T-cell (primary cell): ENCODE measurements at regions of chr6 and their contacts with region 1.

Region 1: DNA sequence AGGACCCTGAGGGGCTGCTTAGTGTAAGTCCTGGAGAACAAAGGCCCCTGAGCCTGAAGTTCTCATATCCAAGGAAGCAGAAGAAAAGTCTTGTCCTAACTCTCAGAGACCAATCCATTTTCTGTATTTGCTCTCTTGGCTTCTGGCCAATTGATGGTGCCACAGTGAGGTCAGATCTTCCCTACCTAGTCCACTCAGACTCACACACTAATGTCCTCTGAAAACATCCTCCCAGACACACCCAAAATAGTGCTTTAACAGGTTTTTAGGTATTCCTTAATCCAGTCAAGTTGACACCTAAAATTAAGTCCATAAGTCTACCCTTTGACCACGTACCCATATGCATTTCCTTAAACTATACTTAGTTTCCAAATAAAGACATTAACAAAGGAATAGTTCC is 29.4 kb downstream of the ZNF292 start:
- DNase-seq: no peak
- ATAC-seq: no peak
- H3K4me3 ChIP-seq: no peak overlapping the region
- H3K4me3 Mint-ChIP-seq: no peak overlapping the region
- H3K27ac ChIP-seq: no peak overlapping the region
- H3K27ac Mint-ChIP-seq: peak overlapping the region in 1 of 2 donors; percentile 7
- H3K4me1 ChIP-seq: peaks cover 5 to 25% of the 10 kb centered on the region in 2 experiments
- H3K4me1 Mint-ChIP-seq: peaks cover 70 to 73% (median 72%) of the 10 kb centered on the region in 3 donors
- H3K27me3 ChIP-seq: no peaks in the 10 kb centered on the region
- H3K27me3 Mint-ChIP-seq: no peaks in the 10 kb centered on the region

Region 2: GRCh38 chr6:86782328-86782727 is 402.5 kb before region 1 on chr6:
- CTCF ChIA-PET with region 1: no interaction called
- POLR2A ChIA-PET with region 1: no interaction called
- DNase-seq: no peak
- ATAC-seq: no peak
- H3K4me3 ChIP-seq: no peak overlapping the region
- H3K4me3 Mint-ChIP-seq: no peak overlapping the region
- H3K27ac ChIP-seq: no peak overlapping the region
- H3K27ac Mint-ChIP-seq: no peak overlapping the region
- H3K4me1 ChIP-seq: no peaks in the 10 kb centered on the region
- H3K4me1 Mint-ChIP-seq: no peaks in the 10 kb centered on the region
- H3K27me3 ChIP-seq: no peaks in the 10 kb centered on the region
- H3K27me3 Mint-ChIP-seq: no peaks in the 10 kb centered on the region

Region 3: GRCh38 chr6:87277123-87277522 is 92.3 kb after region 1 on chr6:
- CTCF ChIA-PET with region 1: no interaction called
- POLR2A ChIA-PET with region 1: interaction called in 1 of 2 experiments, 10 read pairs
- DNase-seq: peak in 1 of 35 experiments; percentile 7
- ATAC-seq: no peak
- H3K4me3 ChIP-seq: no peak overlapping the region
- H3K4me3 Mint-ChIP-seq: no peak overlapping the region
- H3K27ac ChIP-seq: no peak overlapping the region
- H3K27ac Mint-ChIP-seq: peak overlapping the region in 1 of 2 donors; percentile 57
- H3K4me1 ChIP-seq: no peaks in the 10 kb centered on the region
- H3K4me1 Mint-ChIP-seq: peaks cover 18 to 20% (median 19%) of the 10 kb centered on the region in 3 donors
- H3K27me3 ChIP-seq: no peaks in the 10 kb centered on the region
- H3K27me3 Mint-ChIP-seq: no peaks in the 10 kb centered on the region

Region 4: GRCh38 chr6:87350516-87350915 is 165.7 kb after region 1 on chr6:
- CTCF ChIA-PET with region 1: no interaction called
- POLR2A ChIA-PET with region 1: no interaction called
- DNase-seq: no peak
- ATAC-seq: no peak
- H3K4me3 ChIP-seq: no peak overlapping the region
- H3K4me3 Mint-ChIP-seq: no peak overlapping the region
- H3K27ac ChIP-seq: no peak overlapping the region
- H3K27ac Mint-ChIP-seq: no peak overlapping the region
- H3K4me1 ChIP-seq: no peaks in the 10 kb centered on the region
- H3K4me1 Mint-ChIP-seq: no peaks in the 10 kb centered on the region
- H3K27me3 ChIP-seq: no peaks in the 10 kb centered on the region
- H3K27me3 Mint-ChIP-seq: no peaks in the 10 kb centered on the region